PC-9 (cell line): ENCODE measurements at regions of chr1 and their contacts with region 1.

Region 1: GRCh38 chr1:200762099-200762498 is 23.4 kb downstream of the CAMSAP2 start:
- DNase-seq: no peak
- H3K4me3 ChIP-seq: no peak overlapping the region
- H3K27ac ChIP-seq: no peak overlapping the region
- H3K4me1 ChIP-seq: no peaks in the 10 kb centered on the region
- H3K27me3 ChIP-seq: no peaks in the 10 kb centered on the region
- CTCF ChIP-seq: no peak

Region 2: GRCh38 chr1:200751717-200752116 is 10.4 kb before region 1 on chr1:
- CTCF ChIA-PET with region 1: no interaction called
- POLR2A ChIA-PET with region 1: interaction called, 4 read pairs
- intact Hi-C with region 1: loop called (anchors 1 kb)
- DNase-seq: no peak
- H3K4me3 ChIP-seq: no peak overlapping the region
- H3K27ac ChIP-seq: no peak overlapping the region
- H3K4me1 ChIP-seq: no peaks in the 10 kb centered on the region
- H3K27me3 ChIP-seq: no peaks in the 10 kb centered on the region
- CTCF ChIP-seq: no peak